Prostate gland (tissue), 2 donors: ENCODE measurements at regions of chr5 and their contacts with region 1.

Region 1: GRCh38 chr5:134225618-134226440 is at the start of gene PPP2CA:
- DNase-seq: peak; percentile 98
- H3K4me3 ChIP-seq: peak within 1 kb of the TSS; percentile 85 to 100
- H3K27ac ChIP-seq: peak within 1 kb of the TSS; percentile 99 to 100
- H3K4me1 ChIP-seq: peaks cover 6% of the 10 kb centered on the region
- H3K27me3 ChIP-seq: no peaks in the 10 kb centered on the region
- CTCF ChIP-seq: no peak
- POLR2A ChIP-seq: peak; percentile 64
- total RNA-seq, gene PPP2CA: 119 to 175 TPM

Region 2: GRCh38 chr5:134365604-134366003 is 139.8 kb after region 1 on chr5:
- intact Hi-C with region 1: loop called (anchors 2 kb)
- DNase-seq: no peak
- H3K4me3 ChIP-seq: no peak overlapping the region
- H3K27ac ChIP-seq: no peak overlapping the region
- H3K4me1 ChIP-seq: no peaks in the 10 kb centered on the region
- H3K27me3 ChIP-seq: no peaks in the 10 kb centered on the region
- CTCF ChIP-seq: no peak
- POLR2A ChIP-seq: no peak